ENCODE measurements at regions of chr4 and their contacts with region 1.

Region 1: GRCh38 chr4:145909281-145909715 is 29.3 kb downstream of the ZNF827 start:
- DNase-seq: no peak
- CTCF ChIP-seq: no peak

Region 2: GRCh38 chr4:145868637-145869409 is 40.5 kb before region 1 on chr4:
- CTCF ChIA-PET with region 1: interaction called, 11 read pairs
- POLR2A ChIA-PET with region 1: no interaction called
- DNase-seq: peak; percentile 29
- CTCF ChIP-seq: no peak

Region 3: GRCh38 chr4:145887241-145887991 is 21.9 kb before region 1 on chr4:
- CTCF ChIA-PET with region 1: interaction called, 11 read pairs
- POLR2A ChIA-PET with region 1: no interaction called
- DNase-seq: no peak
- CTCF ChIP-seq: no peak

Region 4: GRCh38 chr4:145898926-145899531 is 10.3 kb before region 1 on chr4:
- CTCF ChIA-PET with region 1: interaction called, 13 read pairs
- POLR2A ChIA-PET with region 1: no interaction called
- DNase-seq: no peak
- CTCF ChIP-seq: no peak

Region 5: GRCh38 chr4:145920205-145920604 is 10.9 kb after region 1 on chr4:
- CTCF ChIA-PET with region 1: interaction called, 12 read pairs
- POLR2A ChIA-PET with region 1: no interaction called
- DNase-seq: no peak
- CTCF ChIP-seq: no peak

Region 6: GRCh38 chr4:145930592-145930991 is 21.3 kb after region 1 on chr4:
- CTCF ChIA-PET with region 1: interaction called, 19 read pairs
- POLR2A ChIA-PET with region 1: no interaction called
- DNase-seq: no peak
- CTCF ChIP-seq: no peak

Region 7: GRCh38 chr4:146110871-146111485 is 201.7 kb after region 1 on chr4:
- CTCF ChIA-PET with region 1: no interaction called
- POLR2A ChIA-PET with region 1: no interaction called
- DNase-seq: no peak
- CTCF ChIP-seq: no peak